Posterior cingulate gyrus (tissue), 11 donors: ENCODE measurements at regions of chr2 and their contacts with region 1.

Region 1: DNA sequence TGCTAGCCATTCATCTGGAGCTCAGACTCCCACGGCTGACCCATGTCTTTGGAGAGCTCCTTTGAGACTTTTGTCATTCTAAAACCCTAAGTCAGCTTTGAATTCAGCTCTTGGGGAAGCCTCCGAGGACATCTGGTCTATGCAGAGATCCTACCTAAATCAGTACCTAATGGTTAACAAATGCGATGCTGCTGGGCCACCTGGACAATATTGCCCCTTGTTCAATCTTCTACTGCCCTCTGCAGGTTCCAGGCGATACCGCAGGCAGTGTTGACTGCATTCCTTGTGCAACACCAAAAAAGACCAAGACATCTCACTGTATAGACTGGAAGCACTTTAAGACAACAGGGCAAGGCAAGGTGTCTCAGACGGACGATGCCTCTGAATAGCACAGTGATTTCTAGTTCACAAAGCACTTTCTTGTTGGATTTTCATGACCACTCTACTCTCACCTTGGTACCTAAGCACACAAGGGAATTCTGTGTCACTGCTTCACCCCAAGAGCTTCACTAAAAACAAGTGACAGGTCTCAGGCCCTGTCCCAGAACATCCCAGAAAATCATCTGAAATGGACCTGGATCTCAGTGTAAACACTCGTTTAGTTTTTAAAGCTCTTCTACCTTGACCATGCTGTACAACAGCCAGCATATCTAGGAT is 80.9 kb downstream of the XDH start:
- DNase-seq: peak; percentile 71 to 95 (median 89)

Region 2: GRCh38 chr2:31233741-31234682 is 99.6 kb before region 1 on chr2 and contains the start of gene EHD3:
- intact Hi-C with region 1: loop called (anchors 2 kb)
- DNase-seq: peak; percentile 87 to 99 (median 94)